Head of caudate nucleus (tissue), 42 donors: ENCODE measurements at regions of chr5 and their contacts with region 1.

Region 1: GRCh38 chr5:149442563-149443182 is 63.6 kb upstream of the IL17B start:
- DNase-seq: peak; percentile 52 to 93 (median 84)

Region 2: DNA sequence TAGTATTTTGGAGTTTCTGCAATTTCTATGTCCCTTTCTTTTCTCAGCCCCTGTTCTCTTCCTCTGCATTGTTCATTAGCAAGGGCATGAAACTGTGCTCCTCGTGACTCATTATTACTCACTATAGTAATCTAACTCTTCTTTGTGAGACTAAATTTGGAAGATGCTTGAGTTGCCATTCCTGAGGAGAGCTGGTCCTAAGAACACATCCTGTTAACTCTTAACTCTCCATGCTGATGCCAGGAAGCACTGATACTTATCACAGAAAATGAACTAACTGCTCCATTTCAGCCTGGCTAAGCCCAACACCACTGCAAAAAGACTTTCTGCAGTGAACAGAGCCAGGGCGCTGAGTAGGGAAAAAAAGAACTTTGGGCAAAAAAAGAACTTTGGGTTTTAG is 119.2 kb after region 1 on chr5:
- intact Hi-C with region 1: loop called (anchors 5 kb)
- DNase-seq: peak in 3 of 42 donors; percentile 32 to 54 (median 45)